Activated CD4-positive, alpha-beta memory T cell treated with anti-CD3 and anti-CD28 coated beads for 36 hours (primary cell): ENCODE measurements at regions of chr4 and their contacts with region 1.

Region 1: DNA sequence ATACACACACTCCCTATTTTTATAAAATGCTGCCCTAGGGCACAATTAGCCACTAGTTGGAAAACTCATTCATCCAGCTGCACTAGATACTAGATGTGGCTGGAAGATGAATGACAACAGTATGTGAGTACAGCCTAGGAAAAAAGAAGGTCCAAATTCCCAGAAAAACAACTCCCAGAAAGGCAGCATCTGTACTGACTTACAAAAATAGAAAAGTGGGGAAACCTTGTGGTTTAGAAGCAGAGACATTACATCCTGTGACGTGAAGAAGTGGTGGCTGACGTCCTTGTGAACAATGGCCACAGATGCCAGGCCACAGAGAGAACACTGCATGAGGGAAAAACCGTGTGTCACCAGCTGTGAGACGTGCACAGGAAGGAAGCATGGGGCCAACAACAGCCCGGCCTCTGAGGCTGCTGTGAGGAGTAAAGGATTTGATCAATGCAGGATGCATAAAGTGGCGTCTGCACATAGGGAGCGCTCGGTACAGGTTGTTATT is 81.2 kb downstream of the SPRY1 start:
- DNase-seq: peak; percentile 73
- H3K4me3 Mint-ChIP-seq: no peak overlapping the region
- H3K27ac Mint-ChIP-seq: no peak overlapping the region
- H3K4me1 Mint-ChIP-seq: peaks cover 8% of the 10 kb centered on the region
- H3K27me3 Mint-ChIP-seq: no peaks in the 10 kb centered on the region

Region 2: DNA sequence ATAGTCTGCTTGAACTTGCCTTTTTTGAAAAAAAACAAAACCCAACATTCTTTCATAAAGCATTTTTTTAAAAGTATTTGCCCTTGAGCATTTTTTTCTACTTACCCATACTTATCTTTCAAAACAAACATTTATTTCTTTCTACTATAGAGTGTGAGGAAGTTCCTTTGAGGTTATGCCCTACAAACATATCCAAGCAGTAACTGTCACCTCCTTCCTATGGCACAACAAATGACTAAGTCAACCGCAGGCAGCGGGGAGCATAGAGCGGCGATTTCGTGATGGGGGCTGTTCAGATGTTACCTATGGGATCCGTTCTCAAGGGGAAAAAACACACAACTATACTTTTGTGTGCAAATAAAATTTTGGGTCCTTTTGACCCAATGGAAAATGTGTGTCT is 61.8 kb before region 1 on chr4:
- CTCF ChIA-PET with region 1: no interaction called
- POLR2A ChIA-PET with region 1: no interaction called
- intact Hi-C with region 1: no loop called
- DNase-seq: peak; percentile 59
- H3K4me3 Mint-ChIP-seq: no peak overlapping the region
- H3K27ac Mint-ChIP-seq: no peak overlapping the region
- H3K4me1 Mint-ChIP-seq: peaks cover 45% of the 10 kb centered on the region
- H3K27me3 Mint-ChIP-seq: no peaks in the 10 kb centered on the region

Region 3: GRCh38 chr4:123444290-123444731 is 33.4 kb before region 1 on chr4:
- CTCF ChIA-PET with region 1: no interaction called
- POLR2A ChIA-PET with region 1: no interaction called
- intact Hi-C with region 1: loop called (anchors 5 kb)
- DNase-seq: peak; percentile 37
- H3K4me3 Mint-ChIP-seq: no peak overlapping the region
- H3K27ac Mint-ChIP-seq: peak overlapping the region; percentile 47
- H3K4me1 Mint-ChIP-seq: peaks cover 14% of the 10 kb centered on the region
- H3K27me3 Mint-ChIP-seq: peaks cover 6% of the 10 kb centered on the region

Region 4: GRCh38 chr4:123631786-123632692 is 154.3 kb after region 1 on chr4:
- CTCF ChIA-PET with region 1: no interaction called
- POLR2A ChIA-PET with region 1: no interaction called
- intact Hi-C with region 1: no loop called
- DNase-seq: no peak
- H3K4me3 Mint-ChIP-seq: no peak overlapping the region
- H3K27ac Mint-ChIP-seq: no peak overlapping the region
- H3K4me1 Mint-ChIP-seq: peaks cover 4% of the 10 kb centered on the region
- H3K27me3 Mint-ChIP-seq: no peaks in the 10 kb centered on the region

Region 5: DNA sequence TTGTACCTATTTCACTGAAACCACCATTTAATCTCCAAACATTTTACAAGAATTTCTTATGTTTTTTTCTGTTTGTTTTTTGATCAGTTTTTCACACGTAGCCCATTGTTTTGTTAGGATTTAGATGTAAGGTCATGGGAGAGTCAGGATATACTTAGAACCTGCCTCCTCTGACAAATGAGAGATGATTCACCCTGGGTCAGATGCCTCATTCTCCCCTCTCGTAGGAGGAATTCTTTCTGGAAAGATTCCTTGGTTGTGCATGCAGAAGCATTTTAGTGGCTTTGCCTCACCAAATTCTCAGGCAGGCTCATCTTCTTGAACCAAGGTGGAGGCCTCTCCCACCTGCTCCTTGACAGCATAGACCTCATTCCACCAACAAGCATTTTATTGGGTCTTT is 518.2 kb after region 1 on chr4:
- CTCF ChIA-PET with region 1: no interaction called
- POLR2A ChIA-PET with region 1: no interaction called
- intact Hi-C with region 1: no loop called
- DNase-seq: no peak
- H3K4me3 Mint-ChIP-seq: no peak overlapping the region
- H3K27ac Mint-ChIP-seq: no peak overlapping the region
- H3K4me1 Mint-ChIP-seq: no peaks in the 10 kb centered on the region
- H3K27me3 Mint-ChIP-seq: no peaks in the 10 kb centered on the region